ENCODE measurements at regions of chr7 and their contacts with region 1.

Region 1: DNA sequence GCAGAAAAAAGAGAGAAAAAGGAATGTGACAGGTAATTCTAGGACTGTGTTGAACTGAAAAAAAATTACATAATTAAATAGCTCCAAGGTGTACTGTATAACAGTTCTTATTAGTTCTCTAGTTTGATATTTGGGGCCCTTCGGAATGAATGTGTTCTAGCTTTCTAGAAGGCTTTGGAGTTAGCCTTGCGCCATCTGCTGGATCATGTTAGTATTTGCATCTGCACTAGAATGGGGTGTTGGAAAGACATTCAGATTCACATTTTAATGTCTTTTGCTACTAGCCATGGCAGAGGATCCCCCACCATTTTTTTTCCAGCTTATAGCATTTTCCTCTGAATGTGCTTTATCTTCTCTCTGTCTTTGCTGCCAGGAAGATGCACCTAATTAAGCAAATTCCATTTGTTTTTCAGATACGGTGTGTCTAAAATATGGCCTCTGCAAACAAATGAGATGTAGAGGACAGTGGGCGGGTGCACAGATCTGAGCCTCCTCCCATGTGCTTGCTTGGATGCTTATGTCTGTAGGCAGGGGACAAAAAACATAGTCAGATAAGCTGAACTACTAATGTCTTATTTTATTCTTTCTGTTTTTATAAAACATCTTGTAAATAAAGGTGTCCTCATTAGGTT is 238.5 kb downstream of the PHF14 start:
- DNase-seq: peak; percentile 56
- H3K4me3 ChIP-seq: no peak overlapping the region; a peak in 1 of 4 replicates
- H3K27ac ChIP-seq: no peak overlapping the region
- H3K4me1 ChIP-seq: peaks cover 0 to 5% of the 10 kb centered on the region in 2 experiments; a peak in 2 of 4 replicates
- H3K27me3 ChIP-seq: no peaks in the 10 kb centered on the region
- CTCF ChIP-seq: peak; percentile 98
- EP300 ChIP-seq: no peak
- RAD21 ChIP-seq: peak; percentile 92

Region 2: GRCh38 chr7:10889266-10889898 is 322.8 kb before region 1 on chr7:
- CTCF ChIA-PET with region 1: interaction called, 11 read pairs
- POLR2A ChIA-PET with region 1: no interaction called
- DNase-seq: peak; percentile 78
- H3K4me3 ChIP-seq: no peak overlapping the region; a peak in 1 of 4 replicates
- H3K27ac ChIP-seq: no peak overlapping the region
- H3K4me1 ChIP-seq: no peaks in the 10 kb centered on the region
- H3K27me3 ChIP-seq: no peaks in the 10 kb centered on the region
- CTCF ChIP-seq: peak; percentile 96
- EP300 ChIP-seq: no peak
- RAD21 ChIP-seq: peak; percentile 97

Region 3: GRCh38 chr7:10973061-10973944 is 238.9 kb before region 1 on chr7 and contains the start of gene PHF14:
- CTCF ChIA-PET with region 1: interaction called, 14 read pairs
- POLR2A ChIA-PET with region 1: interaction called, 7 read pairs
- DNase-seq: peak; percentile 97
- H3K4me3 ChIP-seq: peak within 1 kb of the TSS; percentile 72 to 99
- H3K27ac ChIP-seq: peak within 1 kb of the TSS; percentile 88 to 100
- H3K4me1 ChIP-seq: peaks cover 9 to 19% of the 10 kb centered on the region in 2 experiments; a peak in 3 of 4 replicates
- H3K27me3 ChIP-seq: no peaks in the 10 kb centered on the region
- CTCF ChIP-seq: no peak
- EP300 ChIP-seq: no peak; a peak in 1 of 4 replicates
- RAD21 ChIP-seq: 0 out of 2 replicates have a peak, but pooled peaks have one; percentile 1
- polyA plus RNA-seq, gene PHF14: 19.2 and 19.9 TPM in 2 replicates

Region 4: DNA sequence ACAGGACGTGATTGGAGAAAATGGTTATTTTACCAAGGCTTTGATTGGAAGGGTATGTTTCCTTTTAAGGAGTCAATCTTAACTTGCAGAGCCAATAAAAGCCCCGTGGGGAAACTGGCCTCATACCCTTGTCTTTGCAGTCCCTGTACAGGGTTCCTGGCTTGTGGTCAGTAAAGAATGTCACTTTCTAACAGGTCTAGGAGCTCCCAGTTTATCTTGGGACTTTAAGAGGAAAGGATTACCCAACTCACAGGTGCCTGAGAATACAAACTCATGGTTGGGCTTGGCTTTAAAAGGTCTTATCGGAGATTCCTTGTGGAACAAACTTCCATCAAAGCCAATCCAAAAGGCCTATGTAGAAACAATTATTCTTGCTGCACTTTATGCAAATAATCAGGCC is 16.7 kb before region 1 on chr7:
- CTCF ChIA-PET with region 1: interaction called, 26 read pairs
- POLR2A ChIA-PET with region 1: no interaction called
- DNase-seq: no peak
- H3K4me3 ChIP-seq: no peak overlapping the region
- H3K27ac ChIP-seq: no peak overlapping the region
- H3K4me1 ChIP-seq: peaks cover 0 to 8% of the 10 kb centered on the region in 2 experiments; a peak in 2 of 4 replicates
- H3K27me3 ChIP-seq: no peaks in the 10 kb centered on the region
- CTCF ChIP-seq: no peak
- EP300 ChIP-seq: no peak
- RAD21 ChIP-seq: no peak

Region 5: DNA sequence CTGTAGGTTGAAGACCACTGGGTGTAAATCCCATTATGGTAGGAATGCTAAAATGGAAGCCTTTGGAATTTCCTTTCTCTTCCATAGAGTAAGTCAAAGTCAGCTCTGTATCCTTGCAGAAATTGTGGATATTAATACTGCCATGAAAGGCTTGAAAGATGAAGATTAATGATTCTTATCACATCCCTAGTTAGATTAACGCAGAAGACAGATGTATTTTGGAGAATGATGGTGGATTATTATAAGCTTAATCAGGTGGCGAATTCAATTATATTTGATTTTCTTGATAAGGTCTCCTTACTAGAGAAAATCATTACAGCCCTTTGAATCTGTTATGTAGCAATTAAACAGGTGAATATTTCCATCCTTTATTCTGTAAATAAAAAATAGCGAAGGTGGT is 31.5 kb after region 1 on chr7:
- CTCF ChIA-PET with region 1: interaction called, 17 read pairs
- POLR2A ChIA-PET with region 1: no interaction called
- DNase-seq: peak; percentile 24
- H3K4me3 ChIP-seq: no peak overlapping the region
- H3K27ac ChIP-seq: peak overlapping the region in 1 of 2 experiments; percentile 19; a peak in 1 of 4 replicates
- H3K4me1 ChIP-seq: peaks cover 0 to 3% of the 10 kb centered on the region in 2 experiments; a peak in 2 of 4 replicates
- H3K27me3 ChIP-seq: no peaks in the 10 kb centered on the region
- CTCF ChIP-seq: no peak
- EP300 ChIP-seq: peak in 1 of 2 experiments; percentile 43; a peak in 1 of 4 replicates
- RAD21 ChIP-seq: no peak

Region 6: DNA sequence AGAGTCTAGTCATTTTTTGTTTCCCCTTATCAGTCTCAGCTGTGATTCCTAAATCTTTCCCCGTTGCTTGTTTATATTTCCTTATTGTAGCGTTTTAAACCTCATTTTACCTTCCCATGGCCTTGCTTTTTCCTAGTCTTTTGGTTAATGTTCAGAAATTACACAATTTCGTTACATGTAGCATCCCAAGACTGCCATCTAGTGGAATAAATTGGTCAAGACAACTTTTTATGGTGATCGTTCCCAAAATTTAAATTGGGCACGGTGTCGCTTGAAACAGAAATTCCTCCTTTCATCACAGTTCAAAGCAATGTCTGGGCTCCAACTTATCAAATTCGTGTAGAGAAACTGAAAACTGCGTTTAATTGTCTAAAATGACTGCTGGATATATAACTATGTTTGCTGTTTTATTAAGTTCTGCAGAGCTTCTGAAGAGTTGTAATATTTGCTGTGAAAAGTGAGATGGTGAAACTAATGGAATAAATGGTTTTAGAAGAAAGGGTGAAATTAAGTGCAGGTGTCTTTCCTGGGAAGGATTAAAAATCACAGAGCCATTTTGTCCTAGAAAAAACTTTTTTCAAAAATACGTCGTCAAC is 131.7 kb after region 1 on chr7:
- CTCF ChIA-PET with region 1: interaction called, 12 read pairs
- POLR2A ChIA-PET with region 1: no interaction called
- DNase-seq: peak; percentile 22
- H3K4me3 ChIP-seq: peak overlapping the region in 1 of 2 experiments; percentile 32; a peak in 1 of 4 replicates
- H3K27ac ChIP-seq: no peak overlapping the region
- H3K4me1 ChIP-seq: peaks cover 0 to 3% of the 10 kb centered on the region in 2 experiments; a peak in 2 of 4 replicates
- H3K27me3 ChIP-seq: no peaks in the 10 kb centered on the region
- CTCF ChIP-seq: peak; percentile 95
- EP300 ChIP-seq: 0 out of 4 replicates have a peak, but pooled peaks of 1 of the 2 experiments have one; percentile 5
- RAD21 ChIP-seq: peak; percentile 93

Region 7: DNA sequence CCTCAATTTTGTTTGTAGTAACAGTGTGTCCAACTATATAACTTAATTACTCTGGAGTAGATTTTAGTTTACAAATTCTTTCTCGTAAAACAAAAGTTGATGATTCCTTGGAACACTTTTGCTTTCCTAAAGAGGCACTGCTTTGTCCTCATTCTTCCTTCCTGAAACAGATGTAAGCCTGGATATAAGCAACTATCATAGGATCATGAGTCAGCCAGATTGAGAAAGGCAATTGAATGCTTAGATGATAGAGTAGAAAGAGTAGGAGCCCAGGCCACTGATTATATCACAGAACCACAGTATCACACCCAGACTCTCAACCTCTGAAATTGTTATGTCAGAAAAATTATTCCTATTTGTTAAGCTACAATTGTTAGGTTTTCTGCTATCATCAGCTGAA is 1068.8 kb after region 1 on chr7:
- CTCF ChIA-PET with region 1: no interaction called
- POLR2A ChIA-PET with region 1: no interaction called
- DNase-seq: no peak
- H3K4me3 ChIP-seq: no peak overlapping the region
- H3K27ac ChIP-seq: no peak overlapping the region
- H3K4me1 ChIP-seq: no peaks in the 10 kb centered on the region
- H3K27me3 ChIP-seq: no peaks in the 10 kb centered on the region
- CTCF ChIP-seq: no peak
- EP300 ChIP-seq: no peak
- RAD21 ChIP-seq: no peak

Measured in SK-N-SH (cell line).